K562 (cell line): ENCODE measurements at regions of chr2 and their contacts with region 1.

Region 1: DNA sequence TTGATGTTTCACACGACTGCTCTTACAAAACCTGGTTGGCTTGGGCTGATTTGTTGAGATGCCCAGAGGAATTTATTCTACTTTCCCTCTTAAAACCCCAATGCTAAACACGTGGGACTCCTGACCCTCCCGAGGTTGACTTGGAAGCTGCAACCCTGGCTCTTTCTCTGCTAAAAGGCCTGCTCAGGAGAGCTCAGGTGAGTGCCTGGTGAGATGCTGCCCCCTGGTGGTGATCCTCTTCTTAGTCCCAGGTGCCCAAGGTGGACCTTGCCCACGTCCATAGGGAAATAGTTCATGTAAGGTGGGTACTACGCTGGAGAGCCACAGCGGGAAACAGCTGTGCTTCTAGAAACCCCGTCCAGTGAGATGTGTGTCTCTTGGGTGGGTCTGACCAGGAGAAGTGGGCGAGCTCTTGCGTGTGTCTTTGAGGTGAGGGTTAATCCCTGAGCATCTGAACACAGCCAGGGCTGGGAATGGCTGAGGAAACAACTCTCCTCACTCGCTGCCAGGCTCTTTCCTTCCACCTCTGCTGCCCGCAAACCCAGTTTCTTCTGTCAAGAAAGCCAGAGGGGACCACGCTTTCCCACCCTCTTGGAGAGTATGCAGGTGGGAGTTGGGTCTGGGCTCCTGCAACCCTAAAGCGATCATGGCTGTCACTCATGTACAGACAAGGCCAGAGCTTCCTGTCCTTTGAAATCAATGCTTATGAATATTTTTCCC is 25.5 kb upstream of the PXDN start:
- DNase-seq: peak; percentile 69 to 84 (median 77)
- ATAC-seq: peak; percentile 96
- H3K4me3 ChIP-seq: no peak overlapping the region
- H3K27ac ChIP-seq: no peak overlapping the region
- H3K4me1 ChIP-seq: no peaks in the 10 kb centered on the region
- H3K27me3 ChIP-seq: peaks cover 0 to 12% of the 10 kb centered on the region in 2 experiments; a peak in 1 of 5 replicates
- CTCF ChIP-seq: peak; percentile 69 to 83 (median 72)
- EP300 ChIP-seq: no peak
- POLR2A ChIP-seq: no peak
- RAD21 ChIP-seq: peak; percentile 28 to 73; a peak in 3 of 4 replicates

Region 2: DNA sequence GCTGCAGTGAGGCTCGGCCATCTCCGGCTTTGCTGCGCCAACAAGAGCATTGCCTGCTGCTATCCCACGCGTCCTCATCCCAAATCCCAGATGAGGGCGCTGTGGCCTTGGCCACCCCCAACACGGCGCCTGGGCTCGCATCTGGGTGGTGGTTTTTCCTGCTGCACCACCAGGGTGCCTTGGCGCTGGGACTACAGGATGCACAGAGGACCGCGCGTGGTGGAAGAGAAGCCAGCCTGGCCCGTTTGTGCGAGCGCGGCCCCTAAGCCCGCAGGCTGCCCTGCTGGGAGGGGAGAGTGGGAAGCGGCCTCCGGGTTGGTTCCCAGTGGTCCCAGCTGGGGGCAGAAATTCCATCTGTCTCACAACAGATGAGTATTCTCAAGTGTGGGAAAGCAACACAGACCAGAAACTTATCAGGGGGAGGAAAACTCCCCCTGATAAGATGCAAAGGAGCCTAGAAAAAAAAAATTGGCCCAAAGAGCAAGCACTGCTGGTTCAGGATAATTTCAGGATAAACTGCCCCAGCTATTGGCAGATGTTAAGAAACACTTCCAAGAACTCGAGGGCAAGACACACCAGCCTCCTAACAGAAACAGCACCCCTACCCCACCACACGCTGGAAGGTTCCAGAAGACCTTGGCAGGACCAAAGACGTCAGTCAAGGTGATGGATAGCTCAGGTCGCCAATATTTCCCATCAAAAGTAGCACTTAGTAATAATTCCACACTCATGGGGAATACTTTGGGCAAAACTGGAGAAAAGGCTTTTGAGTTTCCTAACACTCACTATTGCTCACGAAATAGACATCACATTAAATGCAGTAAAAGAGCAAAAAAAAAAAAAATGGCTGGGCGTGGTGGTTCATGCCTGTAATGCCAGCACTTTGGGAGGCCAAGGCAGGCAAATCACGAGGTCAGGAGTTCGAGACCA is 177.6 kb before region 1 on chr2:
- CTCF ChIA-PET with region 1: no interaction called
- POLR2A ChIA-PET with region 1: interaction called, 6 read pairs
- in situ Hi-C with region 1: no loop called
- intact Hi-C with region 1: loop called (anchors 5 kb)
- DNase-seq: peak in 1 of 4 experiments; percentile 4
- ATAC-seq: peak; percentile 46; the same call in 1 of the 3 replicates
- H3K4me3 ChIP-seq: no peak overlapping the region
- H3K27ac ChIP-seq: no peak overlapping the region
- H3K4me1 ChIP-seq: no peaks in the 10 kb centered on the region; a peak in 1 of 5 replicates
- H3K27me3 ChIP-seq: peaks cover 0 to 16% of the 10 kb centered on the region in 2 experiments; a peak in 2 of 5 replicates
- CTCF ChIP-seq: peak; percentile 18 to 50 (median 24); a peak in 3 of 6 replicates
- EP300 ChIP-seq: no peak
- POLR2A ChIP-seq: no peak
- RAD21 ChIP-seq: no peak

Region 3: GRCh38 chr2:1841903-1842791 is 72.3 kb after region 1 on chr2:
- CTCF ChIA-PET with region 1: no interaction called
- POLR2A ChIA-PET with region 1: no interaction called
- in situ Hi-C with region 1: no loop called
- intact Hi-C with region 1: no loop called
- DNase-seq: no peak
- ATAC-seq: no peak
- H3K4me3 ChIP-seq: no peak overlapping the region
- H3K27ac ChIP-seq: no peak overlapping the region
- H3K4me1 ChIP-seq: peaks cover 0 to 4% of the 10 kb centered on the region in 2 experiments; a peak in 1 of 5 replicates
- H3K27me3 ChIP-seq: peaks cover 4 to 43% of the 10 kb centered on the region in 2 experiments; a peak in 4 of 5 replicates
- CTCF ChIP-seq: no peak
- EP300 ChIP-seq: no peak
- POLR2A ChIP-seq: no peak
- RAD21 ChIP-seq: no peak